WTC11 (cell line): ENCODE measurements at regions of chr16 and their contacts with region 1.

Region 1: DNA sequence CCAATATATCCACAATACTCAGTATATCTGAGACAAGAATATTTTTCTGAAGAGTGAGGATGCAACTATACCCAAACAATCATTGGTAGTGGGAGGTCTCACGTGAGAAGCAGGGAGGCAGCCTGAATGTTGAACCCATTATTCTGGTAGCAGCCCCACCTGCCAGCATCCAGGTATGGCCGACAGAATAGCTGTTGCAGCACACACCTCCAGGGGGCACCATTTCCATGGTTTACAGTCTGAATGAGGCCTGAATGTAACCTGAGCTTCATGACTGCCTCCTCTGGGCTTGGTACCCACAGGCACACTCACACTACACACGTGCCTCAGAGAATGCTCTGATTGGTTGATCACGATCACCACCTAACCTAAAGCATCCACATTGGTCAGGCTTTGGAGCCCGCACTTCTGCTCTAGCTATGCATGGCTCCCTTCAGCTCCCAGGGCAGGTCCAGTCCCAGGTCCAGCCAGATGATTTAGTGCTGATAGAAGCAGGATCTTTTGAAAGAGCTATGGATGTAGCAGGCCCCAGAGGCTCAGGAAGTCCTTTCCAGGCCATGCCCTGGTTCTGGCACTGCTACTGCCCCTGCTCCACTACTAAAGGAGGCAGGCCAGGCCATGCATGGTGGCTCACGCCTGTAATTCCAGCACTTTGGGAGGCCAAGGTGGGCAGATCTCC is 11.0 kb upstream of the CBFB start:
- DNase-seq: peak; percentile 95
- ATAC-seq: peak; percentile 96
- H3K4me3 Mint-ChIP-seq: no peak overlapping the region
- H3K27ac Mint-ChIP-seq: no peak overlapping the region
- H3K4me1 Mint-ChIP-seq: no peaks in the 10 kb centered on the region
- H3K27me3 Mint-ChIP-seq: peaks cover 41% of the 10 kb centered on the region
- CTCF ChIP-seq: peak; percentile 85

Region 2: DNA sequence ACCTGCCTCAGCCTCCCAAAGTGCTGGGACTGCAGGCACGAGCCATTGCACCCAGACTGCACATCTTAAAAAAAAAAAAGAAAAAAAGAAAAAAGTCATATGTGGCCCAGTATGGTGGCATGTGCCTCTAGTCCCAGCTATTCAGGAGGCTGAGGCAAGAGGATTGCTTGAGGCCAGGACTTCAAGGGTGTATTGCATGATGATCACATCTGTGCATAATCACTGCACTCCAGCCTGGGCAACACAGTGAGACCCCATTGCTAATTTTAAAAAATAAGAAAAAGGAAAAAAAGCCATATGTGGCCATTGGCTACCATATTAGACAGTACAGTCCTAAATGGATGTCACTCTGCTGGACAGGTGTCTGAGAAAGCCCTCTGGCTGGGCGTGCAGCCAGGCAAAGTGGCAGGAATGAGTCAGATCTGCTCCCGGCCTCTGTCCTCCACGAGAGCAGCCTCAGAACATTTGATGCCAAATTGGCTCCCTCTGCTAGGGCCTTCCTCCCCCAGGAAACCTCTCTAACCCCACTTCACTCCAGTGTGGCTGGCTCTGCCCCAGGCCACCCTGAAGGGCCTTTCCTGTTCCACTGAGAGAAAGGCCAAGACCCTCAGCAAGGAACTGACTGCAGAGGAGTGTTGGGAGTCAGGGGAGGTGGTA is 159.1 kb before region 1 on chr16:
- CTCF ChIA-PET with region 1: no interaction called
- POLR2A ChIA-PET with region 1: no interaction called
- DNase-seq: no peak
- ATAC-seq: no peak
- H3K4me3 Mint-ChIP-seq: no peak overlapping the region
- H3K27ac Mint-ChIP-seq: no peak overlapping the region
- H3K4me1 Mint-ChIP-seq: no peaks in the 10 kb centered on the region
- H3K27me3 Mint-ChIP-seq: no peaks in the 10 kb centered on the region; the same call in 1 of the 2 replicates
- CTCF ChIP-seq: no peak

Region 3: GRCh38 chr16:66961065-66961744 is 56.7 kb before region 1 on chr16 and contains the start of gene CES3:
- CTCF ChIA-PET with region 1: interaction called, 20 read pairs
- POLR2A ChIA-PET with region 1: interaction called, 5 read pairs
- DNase-seq: peak; percentile 91
- ATAC-seq: peak; percentile 100
- H3K4me3 Mint-ChIP-seq: peak within 1 kb of the TSS; percentile 66
- H3K27ac Mint-ChIP-seq: peak within 1 kb of the TSS; percentile 56
- H3K4me1 Mint-ChIP-seq: peaks cover 9% of the 10 kb centered on the region
- H3K27me3 Mint-ChIP-seq: peaks cover 8% of the 10 kb centered on the region; the same call in 1 of the 2 replicates
- CTCF ChIP-seq: peak; percentile 72
- total RNA-seq, gene CES3: 3.3 to 6.0 TPM (median 5.7 TPM) in 3 replicates

Region 4: DNA sequence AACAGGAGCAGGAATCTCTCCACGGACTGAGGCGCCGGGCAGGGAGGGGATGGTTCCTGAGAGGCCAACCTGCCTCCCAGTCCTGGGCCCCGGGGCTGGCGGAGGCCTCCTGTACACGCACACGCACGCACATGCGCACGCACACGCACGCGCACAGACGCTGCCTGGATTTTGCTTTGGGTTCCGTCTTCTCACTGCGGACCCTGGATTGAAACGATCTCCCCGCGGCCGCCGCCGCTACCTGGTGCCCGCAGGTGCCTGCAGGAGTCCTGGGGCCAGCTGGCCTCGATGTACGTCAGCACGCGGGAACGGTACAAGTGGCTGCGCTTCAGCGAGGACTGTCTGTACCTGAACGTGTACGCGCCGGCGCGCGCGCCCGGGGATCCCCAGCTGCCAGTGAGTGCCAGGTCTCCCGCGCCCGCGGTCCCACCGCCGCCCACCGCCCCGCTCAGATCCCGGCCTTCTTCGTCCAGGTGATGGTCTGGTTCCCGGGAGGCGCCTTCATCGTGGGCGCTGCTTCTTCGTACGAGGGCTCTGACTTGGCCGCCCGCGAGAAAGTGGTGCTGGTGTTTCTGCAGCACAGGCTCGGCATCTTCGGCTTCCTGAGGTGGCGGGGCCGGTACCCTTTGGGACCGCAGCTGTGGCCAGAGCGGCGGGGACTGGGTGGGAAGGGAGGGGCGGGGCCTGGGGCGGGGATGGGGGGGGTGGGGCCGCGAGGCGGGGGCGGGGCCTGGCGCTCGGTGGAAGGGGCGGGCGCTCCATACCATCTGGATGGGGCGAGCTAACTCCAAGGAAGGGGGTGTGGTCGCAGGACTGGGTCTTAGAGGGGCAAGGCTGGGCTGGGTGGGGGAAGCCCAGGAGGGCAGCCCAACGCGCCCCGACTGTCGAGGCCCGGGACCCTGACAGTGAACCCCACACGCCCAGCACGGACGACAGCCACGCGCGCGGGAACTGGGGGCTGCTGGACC is 17.3 kb before region 1 on chr16:
- CTCF ChIA-PET with region 1: interaction called, 25 read pairs
- POLR2A ChIA-PET with region 1: interaction called, 3 read pairs
- DNase-seq: peak; percentile 73
- ATAC-seq: peak; percentile 90
- H3K4me3 Mint-ChIP-seq: peak overlapping the region; percentile 66
- H3K27ac Mint-ChIP-seq: no peak overlapping the region
- H3K4me1 Mint-ChIP-seq: peaks cover 4% of the 10 kb centered on the region
- H3K27me3 Mint-ChIP-seq: peaks cover 80% of the 10 kb centered on the region
- CTCF ChIP-seq: no peak

Region 5: GRCh38 chr16:67028555-67029248 is 10.8 kb after region 1 on chr16 and contains the start of gene CBFB:
- CTCF ChIA-PET with region 1: interaction called, 51 read pairs
- POLR2A ChIA-PET with region 1: interaction called, 3 read pairs
- DNase-seq: peak; percentile 78
- ATAC-seq: peak; percentile 83
- H3K4me3 Mint-ChIP-seq: peak within 1 kb of the TSS; percentile 84
- H3K27ac Mint-ChIP-seq: no peak within 1 kb of the TSS
- H3K4me1 Mint-ChIP-seq: peaks cover 16% of the 10 kb centered on the region; the same call in 1 of the 2 replicates
- H3K27me3 Mint-ChIP-seq: peaks cover 10% of the 10 kb centered on the region
- CTCF ChIP-seq: no peak
- total RNA-seq, gene CBFB: 36.9 to 40.9 TPM (median 37.1 TPM) in 3 replicates

Region 6: DNA sequence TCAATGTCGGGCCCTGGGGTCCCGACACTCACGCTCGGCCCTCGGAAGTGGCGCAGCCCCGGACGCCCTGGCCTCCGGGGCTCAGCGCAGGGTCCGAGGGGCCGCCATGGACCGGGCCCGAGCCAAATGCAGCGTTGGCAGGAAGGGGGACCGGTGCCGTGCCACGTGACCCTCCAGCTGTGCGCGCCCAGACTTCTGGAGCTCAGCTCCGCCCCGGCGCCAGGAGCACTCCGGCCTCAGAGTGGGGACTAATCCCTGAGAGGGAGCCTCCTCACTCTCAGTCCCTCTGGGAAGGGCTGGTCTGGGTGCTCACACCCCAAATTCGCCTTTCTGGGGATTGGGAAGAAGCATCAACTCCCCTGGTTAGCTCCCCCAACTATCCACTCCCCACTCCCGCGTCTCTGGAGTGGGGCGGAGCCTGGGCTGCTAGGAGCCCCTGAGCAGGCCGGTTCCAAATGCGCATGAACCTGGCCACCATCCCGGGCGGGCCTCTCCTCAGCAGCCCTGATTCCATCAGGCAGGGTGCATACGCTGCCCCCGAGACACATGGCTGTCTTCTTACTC is 133.0 kb after region 1 on chr16 and contains the start of gene B3GNT9:
- CTCF ChIA-PET with region 1: interaction called, 79 read pairs
- POLR2A ChIA-PET with region 1: interaction called, 4 read pairs
- DNase-seq: peak; percentile 77
- ATAC-seq: peak; percentile 36
- H3K4me3 Mint-ChIP-seq: peak within 1 kb of the TSS; percentile 75
- H3K27ac Mint-ChIP-seq: no peak within 1 kb of the TSS
- H3K4me1 Mint-ChIP-seq: peaks cover 8% of the 10 kb centered on the region
- H3K27me3 Mint-ChIP-seq: peaks cover 58% of the 10 kb centered on the region
- CTCF ChIP-seq: no peak
- total RNA-seq, gene B3GNT9: 6.4 to 7.8 TPM (median 7.6 TPM) in 3 replicates

Region 7: DNA sequence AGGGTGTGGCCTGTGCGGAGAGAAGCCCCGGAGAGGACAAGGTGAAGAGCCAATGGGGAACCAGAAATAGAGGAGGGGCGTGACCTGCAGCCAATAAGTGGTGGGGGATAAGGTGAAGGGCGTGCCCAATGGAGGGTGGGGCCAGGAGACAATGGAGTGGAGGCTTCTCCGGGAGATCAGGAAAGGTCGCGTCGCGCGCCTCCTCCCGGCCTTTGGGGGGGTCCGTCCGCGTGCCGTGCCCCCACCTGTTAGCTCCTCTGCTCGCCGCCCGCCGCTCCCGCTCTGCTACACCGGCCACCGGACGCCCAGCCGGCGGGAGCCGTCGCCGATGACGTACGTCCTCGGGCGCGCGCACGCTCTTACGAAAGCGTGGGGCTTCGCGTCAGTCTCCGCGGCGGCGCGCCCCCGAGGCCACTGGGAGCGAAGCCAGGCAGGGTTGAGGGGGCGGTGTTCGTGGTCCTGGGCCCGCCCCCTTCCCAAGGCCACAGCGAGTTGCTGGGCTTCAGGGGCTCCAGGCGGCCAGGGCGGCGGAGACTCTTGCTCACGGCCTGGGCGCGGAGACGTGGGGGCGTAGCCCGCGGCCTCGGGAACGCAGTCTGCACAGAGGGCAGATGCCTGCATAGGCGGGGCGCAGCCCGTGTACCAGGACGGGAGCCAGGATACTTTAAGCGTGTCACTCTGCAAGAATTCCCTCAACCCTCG is 165.8 kb after region 1 on chr16 and contains the start of gene MATCAP1:
- CTCF ChIA-PET with region 1: interaction called, 34 read pairs
- POLR2A ChIA-PET with region 1: no interaction called
- DNase-seq: peak; percentile 94
- ATAC-seq: peak; percentile 90
- H3K4me3 Mint-ChIP-seq: peak within 1 kb of the TSS; percentile 82
- H3K27ac Mint-ChIP-seq: no peak within 1 kb of the TSS
- H3K4me1 Mint-ChIP-seq: peaks cover 20% of the 10 kb centered on the region
- H3K27me3 Mint-ChIP-seq: peaks cover 31% of the 10 kb centered on the region
- CTCF ChIP-seq: no peak
- total RNA-seq, gene MATCAP1: 40.8 to 54.3 TPM (median 50.5 TPM) in 3 replicates